ENCODE measurements at regions of chr2 and their contacts with region 1.

Region 1: DNA sequence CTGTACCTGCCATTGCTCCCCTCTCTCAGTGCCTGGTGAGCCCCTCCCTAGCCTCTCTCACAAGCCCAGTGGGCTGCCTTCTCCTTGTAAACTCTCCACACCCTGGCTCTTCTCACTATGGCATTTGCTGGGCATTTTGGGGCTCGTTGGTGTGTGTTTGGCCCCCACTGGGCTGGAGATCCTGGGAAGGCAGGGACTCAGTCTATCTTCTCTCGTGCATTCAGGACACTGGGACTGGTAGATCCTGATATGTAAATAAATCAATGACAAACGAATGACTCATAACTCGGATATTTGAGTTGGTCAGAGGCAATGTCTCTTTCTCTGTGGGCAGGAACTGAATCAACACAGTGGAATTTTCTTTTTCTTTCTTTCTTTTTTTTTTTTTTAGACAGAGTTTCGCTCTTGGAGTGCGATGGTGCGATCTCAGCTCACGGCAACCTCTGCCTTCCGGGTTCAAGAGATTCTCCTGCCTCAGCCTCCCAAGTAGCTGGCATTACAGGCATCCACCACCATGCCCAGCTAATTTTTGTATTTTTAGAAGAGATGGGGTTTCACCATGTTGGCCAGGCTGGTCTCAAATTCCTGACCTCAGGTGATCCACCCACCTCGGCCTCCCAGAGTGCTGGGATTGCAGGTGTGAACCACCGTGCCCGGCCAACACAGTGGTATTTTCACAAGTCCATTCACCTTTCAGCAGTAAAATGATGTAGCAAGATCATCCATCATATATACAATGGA is 144.6 kb upstream of the SPRED2 start:
- H3K4me3 Mint-ChIP-seq: no peak overlapping the region
- H3K27ac Mint-ChIP-seq: no peak overlapping the region
- H3K4me1 Mint-ChIP-seq: peaks cover 12% of the 10 kb centered on the region
- H3K27me3 Mint-ChIP-seq: peaks cover 10% of the 10 kb centered on the region

Region 2: DNA sequence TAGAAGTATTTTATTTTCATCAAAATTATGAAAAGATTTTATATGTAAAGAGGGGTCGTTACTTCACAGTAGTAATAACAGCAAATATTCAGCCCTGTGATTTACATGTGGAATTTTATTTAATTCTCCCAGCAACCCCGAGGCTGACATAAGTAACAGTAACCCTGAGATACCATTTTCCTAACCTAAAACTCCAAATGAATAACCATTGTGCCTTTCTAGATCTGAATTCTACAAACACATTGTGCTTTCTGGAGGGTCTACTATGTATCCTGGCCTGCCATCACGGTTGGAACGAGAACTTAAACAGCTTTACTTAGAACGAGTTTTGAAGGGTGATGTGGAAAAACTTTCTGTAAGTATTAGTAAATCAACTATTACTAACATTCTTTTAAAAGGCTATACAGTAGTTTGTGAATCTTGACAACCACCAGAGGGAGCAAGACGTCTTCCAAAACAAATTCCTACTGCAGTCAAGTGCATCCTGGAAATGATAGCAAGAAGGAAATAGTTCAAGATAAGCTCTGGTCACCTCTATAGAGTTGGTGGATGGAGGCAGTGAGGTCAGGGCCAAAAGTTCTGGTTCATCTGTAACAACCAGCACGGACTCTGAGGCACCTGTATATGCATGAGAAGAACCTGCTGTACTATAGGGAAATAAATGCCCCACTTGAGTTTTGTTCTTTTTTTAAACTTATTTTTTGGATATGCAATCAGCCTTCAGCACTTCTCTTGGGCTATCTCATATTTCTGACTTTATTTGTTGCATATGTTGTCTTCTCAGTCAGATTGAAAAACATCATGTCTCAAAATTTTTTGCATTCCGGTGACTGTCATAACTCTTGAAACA is 312.0 kb before region 1 on chr2:
- intact Hi-C with region 1: loop called (anchors 1 kb)
- H3K4me3 Mint-ChIP-seq: no peak overlapping the region
- H3K27ac Mint-ChIP-seq: no peak overlapping the region
- H3K4me1 Mint-ChIP-seq: peaks cover 24% of the 10 kb centered on the region
- H3K27me3 Mint-ChIP-seq: no peaks in the 10 kb centered on the region

Region 3: DNA sequence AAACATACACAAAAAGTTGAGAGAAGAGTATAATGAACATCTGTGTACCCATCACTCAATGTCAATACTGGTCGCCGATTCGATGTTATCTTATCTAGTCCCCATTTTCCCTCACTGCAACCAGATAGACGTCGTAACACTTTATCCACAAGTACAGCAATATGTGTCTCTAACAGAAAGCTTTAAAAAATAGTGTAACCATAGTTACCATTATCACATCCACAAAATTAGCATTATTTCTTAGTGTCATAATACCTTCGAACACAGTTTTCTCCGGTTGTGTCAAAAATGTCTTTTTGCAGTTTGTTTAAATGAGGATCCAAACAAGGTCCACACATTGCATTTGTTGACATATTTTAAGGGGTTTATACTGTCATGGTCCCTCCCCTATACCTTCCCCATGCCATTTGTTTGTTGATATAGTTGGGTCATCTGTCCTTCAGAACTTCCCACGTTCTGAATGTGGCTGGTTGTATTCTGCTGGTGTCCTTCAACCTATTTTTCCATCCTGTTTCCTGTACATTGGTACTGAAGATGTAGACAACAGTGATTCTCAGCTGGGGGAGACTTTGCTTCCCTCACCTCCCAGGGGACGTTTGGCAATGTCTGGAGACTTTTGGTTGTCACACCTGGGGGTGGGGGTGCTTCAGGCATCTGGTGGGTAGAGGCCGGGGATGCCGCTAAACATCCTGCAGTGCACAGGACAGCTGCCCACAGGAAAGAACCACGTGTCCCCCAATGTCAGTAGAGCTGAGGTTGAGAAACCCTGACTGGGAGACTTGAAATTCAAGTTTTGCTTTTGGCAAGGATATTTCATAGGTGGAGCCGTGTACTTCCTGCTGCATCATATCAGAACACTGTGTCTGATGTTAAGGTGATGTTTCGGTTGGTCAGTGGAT is 72.0 kb before region 1 on chr2:
- intact Hi-C with region 1: loop called (anchors 2 kb)
- H3K4me3 Mint-ChIP-seq: no peak overlapping the region
- H3K27ac Mint-ChIP-seq: no peak overlapping the region
- H3K4me1 Mint-ChIP-seq: no peaks in the 10 kb centered on the region
- H3K27me3 Mint-ChIP-seq: peaks cover 4% of the 10 kb centered on the region